Panc1 (cell line): ENCODE measurements at regions of chr2 and their contacts with region 1.

Region 1: DNA sequence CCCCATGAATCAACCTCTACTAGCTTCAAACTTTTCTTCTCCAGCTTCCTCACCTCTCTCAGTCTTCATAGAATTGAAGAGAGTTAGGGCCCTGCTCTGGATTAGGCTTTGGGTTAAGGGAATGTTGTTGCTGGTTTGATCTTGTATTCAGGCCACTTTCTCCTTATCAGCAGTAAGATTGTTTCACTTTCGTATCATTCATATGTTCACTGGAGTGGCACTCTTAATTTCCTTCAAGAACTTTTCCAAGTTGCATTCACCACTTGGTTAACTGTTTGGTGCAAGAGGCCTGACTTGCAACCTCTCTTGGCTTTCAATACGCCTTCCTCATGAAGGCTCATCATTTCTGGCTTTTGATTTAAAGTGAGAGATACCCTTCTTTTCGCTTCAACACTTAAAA is 22.8 kb downstream of the OXER1 start:
- DNase-seq: no peak
- ATAC-seq: no peak
- H3K4me3 ChIP-seq: no peak overlapping the region
- H3K27ac ChIP-seq: no peak overlapping the region
- H3K4me1 ChIP-seq: no peaks in the 10 kb centered on the region
- H3K27me3 ChIP-seq: no peaks in the 10 kb centered on the region
- CTCF ChIP-seq: no peak

Region 2: DNA sequence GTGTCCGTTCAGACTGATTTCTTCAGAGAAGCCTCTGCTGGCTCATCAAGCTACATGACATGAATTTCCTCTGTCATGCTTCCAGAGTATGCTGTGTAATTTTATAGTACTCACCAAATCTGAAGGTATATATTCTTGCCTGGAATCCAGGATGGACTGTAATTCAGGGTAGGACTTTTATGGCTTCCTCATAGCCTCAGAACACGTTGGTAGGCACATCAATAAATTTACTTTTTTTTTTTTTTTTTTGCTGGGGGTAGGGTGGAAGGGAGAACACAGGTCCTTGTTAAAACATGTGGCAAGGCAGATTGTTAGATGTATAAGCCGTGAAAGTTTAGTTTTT is 138.3 kb before region 1 on chr2:
- CTCF ChIA-PET with region 1: no interaction called
- POLR2A ChIA-PET with region 1: interaction called, 10 read pairs
- in situ Hi-C with region 1: no loop called
- intact Hi-C with region 1: no loop called
- DNase-seq: no peak
- ATAC-seq: no peak
- H3K4me3 ChIP-seq: no peak overlapping the region
- H3K27ac ChIP-seq: no peak overlapping the region
- H3K4me1 ChIP-seq: no peaks in the 10 kb centered on the region
- H3K27me3 ChIP-seq: no peaks in the 10 kb centered on the region
- CTCF ChIP-seq: no peak